Right ventricle myocardium inferior (tissue), 1 donor: ENCODE measurements at regions of chr17 and their contacts with region 1.

Region 1: DNA sequence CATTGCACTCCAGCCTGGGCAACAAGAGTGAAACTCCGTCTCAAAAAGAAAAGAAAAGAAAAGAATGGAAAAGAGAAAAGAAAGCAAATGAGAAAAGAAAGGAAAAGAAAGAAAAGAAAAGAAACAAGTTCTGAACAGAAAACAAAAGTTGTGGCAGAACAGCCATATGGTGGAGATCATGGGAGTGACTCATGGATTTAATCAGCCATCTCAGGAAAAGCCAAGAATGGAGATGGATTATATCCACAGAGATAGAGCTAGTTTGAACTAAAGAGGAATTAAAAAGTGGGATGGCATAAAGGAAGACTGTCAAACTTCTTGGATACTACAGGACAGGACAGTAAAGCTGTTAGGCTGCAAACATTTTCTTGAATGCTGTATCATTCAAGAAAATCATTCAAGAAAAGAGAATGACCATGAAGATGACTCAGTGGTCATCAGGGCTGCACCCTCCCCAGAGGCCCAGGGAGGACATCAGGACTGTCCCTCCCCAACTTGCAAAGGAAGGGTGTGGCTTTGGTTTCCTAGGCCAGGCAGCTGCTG is 120.6 kb downstream of the USP22 start:
- DNase-seq: no peak
- ATAC-seq: peak; percentile 83

Region 2: GRCh38 chr17:20935740-20936139 is 13.5 kb after region 1 on chr17:
- intact Hi-C with region 1: loop called (anchors 1 kb)
- DNase-seq: no peak
- ATAC-seq: peak; percentile 65